MCF 10A (cell line): ENCODE measurements at regions of chr1 and their contacts with region 1.

Region 1: GRCh38 chr1:201649761-201650622 is 111.1 kb downstream of the NAV1 start:
- DNase-seq: peak; percentile 85
- H3K4me3 Mint-ChIP-seq: peak overlapping the region; percentile 80
- H3K27ac Mint-ChIP-seq: peak overlapping the region; percentile 79
- H3K4me1 Mint-ChIP-seq: peaks cover 15% of the 10 kb centered on the region
- H3K27me3 Mint-ChIP-seq: no peaks in the 10 kb centered on the region
- CTCF ChIP-seq: no peak

Region 2: DNA sequence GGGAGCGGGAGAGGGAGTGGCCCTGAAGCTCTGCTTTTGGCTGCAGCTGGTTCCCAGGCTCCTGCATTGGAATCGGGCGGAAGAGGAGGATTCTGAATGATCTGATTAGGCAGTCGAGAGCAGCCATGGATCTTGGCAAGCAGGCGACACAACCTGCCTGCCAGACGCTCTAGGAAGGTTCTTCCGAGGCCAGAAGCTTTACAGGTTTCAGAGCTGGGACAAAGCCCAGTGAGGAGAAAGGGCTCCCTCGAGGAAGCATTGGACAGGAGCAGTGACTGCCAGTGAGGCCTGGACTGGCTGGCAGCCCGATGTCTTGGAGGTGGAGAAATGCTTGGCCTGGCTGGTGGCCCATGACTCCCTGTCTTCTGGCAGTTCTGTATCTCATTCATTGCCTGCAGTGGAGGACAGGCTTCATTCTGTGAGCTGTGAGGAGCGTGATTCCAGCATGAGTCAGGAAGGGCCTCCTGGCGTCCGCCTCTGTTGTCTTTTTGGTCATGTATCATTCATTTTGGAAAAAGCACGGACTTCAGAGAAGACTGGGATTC is 46.3 kb after region 1 on chr1:
- CTCF ChIA-PET with region 1: interaction called, 3 read pairs
- POLR2A ChIA-PET with region 1: interaction called, 11 read pairs
- intact Hi-C with region 1: loop called (anchors 1 kb)
- DNase-seq: peak; percentile 100
- H3K4me3 Mint-ChIP-seq: peak overlapping the region; percentile 28
- H3K27ac Mint-ChIP-seq: peak overlapping the region; percentile 44
- H3K4me1 Mint-ChIP-seq: peaks cover 32% of the 10 kb centered on the region
- H3K27me3 Mint-ChIP-seq: no peaks in the 10 kb centered on the region
- CTCF ChIP-seq: peak; percentile 6